Activated CD8-positive, alpha-beta T cell treated with anti-CD3 and anti-CD28 coated beads, Interleukin-2, amount 10 ng/mL, durations not matched to agents 7 days and 5 days (primary cell): ENCODE measurements at regions of chr14 and their contacts with region 1.

Region 1: DNA sequence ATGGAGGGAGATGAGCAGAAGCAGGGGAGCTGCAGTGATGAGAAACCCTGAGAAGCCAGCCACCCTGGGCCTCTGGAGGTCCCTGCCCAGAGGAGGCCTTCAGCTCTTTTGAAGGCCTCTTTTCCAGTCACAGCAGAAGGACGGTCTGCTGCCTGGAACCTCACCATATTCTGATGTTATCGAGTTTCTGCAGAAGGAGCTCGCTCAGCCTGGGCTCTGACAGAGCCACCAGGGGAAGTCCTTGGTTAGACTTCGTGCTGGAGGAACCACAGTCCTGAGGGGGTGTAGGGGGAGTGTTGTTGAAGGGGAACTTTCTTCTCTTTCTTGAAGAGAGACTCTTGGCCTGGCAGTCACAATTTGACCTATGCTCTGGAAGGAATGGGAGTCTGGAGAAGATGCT is 25.1 kb upstream of the BATF start:
- DNase-seq: peak; percentile 53
- ATAC-seq: peak; percentile 88
- H3K4me3 Mint-ChIP-seq: no peak overlapping the region
- H3K27ac Mint-ChIP-seq: peak overlapping the region; percentile 75
- H3K4me1 Mint-ChIP-seq: peaks cover 53% of the 10 kb centered on the region
- H3K27me3 Mint-ChIP-seq: no peaks in the 10 kb centered on the region

Region 2: GRCh38 chr14:75307700-75308379 is 189.4 kb before region 1 on chr14:
- CTCF ChIA-PET with region 1: interaction called, 138 read pairs
- POLR2A ChIA-PET with region 1: no interaction called
- DNase-seq: peak; percentile 81
- ATAC-seq: peak; percentile 80
- H3K4me3 Mint-ChIP-seq: no peak overlapping the region
- H3K27ac Mint-ChIP-seq: no peak overlapping the region
- H3K4me1 Mint-ChIP-seq: peaks cover 26% of the 10 kb centered on the region
- H3K27me3 Mint-ChIP-seq: peaks cover 3% of the 10 kb centered on the region

Region 3: GRCh38 chr14:75514673-75515628 is 17.8 kb after region 1 on chr14:
- CTCF ChIA-PET with region 1: interaction called, 10 read pairs
- POLR2A ChIA-PET with region 1: interaction called, 5 read pairs
- DNase-seq: peak; percentile 61
- ATAC-seq: peak; percentile 77
- H3K4me3 Mint-ChIP-seq: peak overlapping the region; percentile 79
- H3K27ac Mint-ChIP-seq: peak overlapping the region; percentile 95
- H3K4me1 Mint-ChIP-seq: peaks cover 36% of the 10 kb centered on the region
- H3K27me3 Mint-ChIP-seq: no peaks in the 10 kb centered on the region

Region 4: GRCh38 chr14:75522224-75522982 is 25.2 kb after region 1 on chr14 and contains the start of gene BATF:
- CTCF ChIA-PET with region 1: interaction called, 16 read pairs
- POLR2A ChIA-PET with region 1: interaction called, 19 read pairs
- DNase-seq: peak; percentile 87
- ATAC-seq: peak; percentile 84
- H3K4me3 Mint-ChIP-seq: peak within 1 kb of the TSS; percentile 100
- H3K27ac Mint-ChIP-seq: peak within 1 kb of the TSS; percentile 99
- H3K4me1 Mint-ChIP-seq: peaks cover 63% of the 10 kb centered on the region
- H3K27me3 Mint-ChIP-seq: no peaks in the 10 kb centered on the region
- total RNA-seq, gene BATF: 41.3 to 41.6 TPM

Region 5: DNA sequence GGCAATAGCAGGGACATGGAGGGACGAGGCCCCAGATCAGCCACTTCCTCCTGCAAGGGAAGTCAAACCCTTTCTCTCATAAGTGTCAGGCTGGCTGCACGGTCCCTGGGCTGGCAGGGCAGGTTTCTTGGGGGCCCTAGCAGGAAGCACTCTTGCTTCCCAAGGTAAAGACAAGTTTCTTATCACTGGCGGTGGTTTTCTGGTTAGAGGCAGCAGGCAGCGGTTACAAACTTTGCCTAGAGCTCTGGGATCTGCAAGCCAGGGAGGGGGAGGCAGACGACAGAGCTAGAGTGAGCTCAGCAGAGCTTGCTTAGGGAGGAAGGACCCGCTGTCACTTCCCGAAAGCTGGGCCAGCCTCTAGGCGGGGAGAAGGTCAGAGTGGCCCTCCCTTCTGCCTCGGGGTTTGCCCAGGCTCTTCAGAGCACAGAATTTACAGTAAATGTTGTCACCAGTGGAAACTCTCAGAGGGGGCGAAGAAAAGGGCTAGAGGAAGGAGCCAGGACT is 45.4 kb after region 1 on chr14:
- CTCF ChIA-PET with region 1: interaction called, 10 read pairs
- POLR2A ChIA-PET with region 1: interaction called, 4 read pairs
- DNase-seq: peak; percentile 77
- ATAC-seq: peak; percentile 86
- H3K4me3 Mint-ChIP-seq: peak overlapping the region; percentile 48
- H3K27ac Mint-ChIP-seq: peak overlapping the region; percentile 97
- H3K4me1 Mint-ChIP-seq: peaks cover 50% of the 10 kb centered on the region
- H3K27me3 Mint-ChIP-seq: no peaks in the 10 kb centered on the region